Calu3 (cell line): ENCODE measurements at regions of chr19 and their contacts with region 1.

Region 1: GRCh38 chr19:13430790-13431582 is 75.3 kb downstream of the CACNA1A start:
- DNase-seq: peak; percentile 56
- H3K4me3 Mint-ChIP-seq: no peak overlapping the region
- H3K27ac Mint-ChIP-seq: no peak overlapping the region
- H3K4me1 Mint-ChIP-seq: no peaks in the 10 kb centered on the region
- H3K27me3 Mint-ChIP-seq: peaks cover 29% of the 10 kb centered on the region
- CTCF ChIP-seq: peak; percentile 60

Region 2: DNA sequence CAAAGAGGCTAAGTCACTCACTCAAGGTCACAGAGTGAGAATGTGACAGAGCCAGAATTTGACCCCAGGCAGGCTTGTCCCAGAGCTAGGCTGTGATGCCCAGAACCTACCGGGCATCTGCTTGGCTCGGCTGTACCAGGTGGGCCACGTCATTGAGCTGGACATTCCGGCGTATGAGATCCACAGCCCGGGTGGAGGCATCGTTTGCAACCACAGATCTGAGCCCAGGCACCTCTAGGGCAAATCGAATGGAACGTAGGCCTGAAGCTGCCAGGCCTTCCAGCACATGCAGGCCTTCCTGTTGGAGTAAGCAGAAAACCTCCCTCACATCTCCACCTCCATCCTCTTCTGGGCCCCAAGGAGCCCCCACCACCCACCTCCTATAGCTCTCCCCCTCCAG is 315.8 kb before region 1 on chr19:
- CTCF ChIA-PET with region 1: interaction called, 16 read pairs
- intact Hi-C with region 1: no loop called
- DNase-seq: no peak
- H3K4me3 Mint-ChIP-seq: peak overlapping the region; percentile 85
- H3K27ac Mint-ChIP-seq: no peak overlapping the region
- H3K4me1 Mint-ChIP-seq: peaks cover 9% of the 10 kb centered on the region
- H3K27me3 Mint-ChIP-seq: no peaks in the 10 kb centered on the region
- CTCF ChIP-seq: no peak

Region 3: GRCh38 chr19:13451434-13451995 is 20.5 kb after region 1 on chr19:
- CTCF ChIA-PET with region 1: no interaction called
- intact Hi-C with region 1: no loop called
- DNase-seq: no peak
- H3K4me3 Mint-ChIP-seq: no peak overlapping the region
- H3K27ac Mint-ChIP-seq: no peak overlapping the region
- H3K4me1 Mint-ChIP-seq: no peaks in the 10 kb centered on the region
- H3K27me3 Mint-ChIP-seq: peaks cover 46% of the 10 kb centered on the region
- CTCF ChIP-seq: no peak

Region 4: DNA sequence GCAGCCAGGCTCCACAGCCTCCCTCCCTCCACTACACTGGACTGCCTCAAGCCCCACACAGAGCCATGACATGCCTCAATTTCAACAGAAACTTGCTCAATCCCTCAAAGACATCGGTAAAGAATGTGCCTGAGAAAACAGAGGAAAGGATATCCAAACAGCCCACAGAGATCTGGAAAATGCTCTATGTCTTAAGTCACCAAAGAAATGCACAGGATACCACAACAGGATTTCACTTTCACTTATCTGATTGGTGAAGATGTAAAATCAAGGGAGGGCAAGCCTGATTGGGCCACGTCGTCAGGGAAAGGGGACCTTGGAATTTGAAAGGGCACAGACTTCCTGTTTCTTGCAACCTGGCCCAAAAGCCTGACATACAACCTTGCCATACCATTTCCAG is 61.1 kb after region 1 on chr19:
- CTCF ChIA-PET with region 1: no interaction called
- intact Hi-C with region 1: no loop called
- DNase-seq: no peak
- H3K4me3 Mint-ChIP-seq: no peak overlapping the region
- H3K27ac Mint-ChIP-seq: no peak overlapping the region
- H3K4me1 Mint-ChIP-seq: no peaks in the 10 kb centered on the region
- H3K27me3 Mint-ChIP-seq: peaks cover 84% of the 10 kb centered on the region
- CTCF ChIP-seq: no peak